ENCODE measurements at regions of chr2 and their contacts with region 1.

Region 1: DNA sequence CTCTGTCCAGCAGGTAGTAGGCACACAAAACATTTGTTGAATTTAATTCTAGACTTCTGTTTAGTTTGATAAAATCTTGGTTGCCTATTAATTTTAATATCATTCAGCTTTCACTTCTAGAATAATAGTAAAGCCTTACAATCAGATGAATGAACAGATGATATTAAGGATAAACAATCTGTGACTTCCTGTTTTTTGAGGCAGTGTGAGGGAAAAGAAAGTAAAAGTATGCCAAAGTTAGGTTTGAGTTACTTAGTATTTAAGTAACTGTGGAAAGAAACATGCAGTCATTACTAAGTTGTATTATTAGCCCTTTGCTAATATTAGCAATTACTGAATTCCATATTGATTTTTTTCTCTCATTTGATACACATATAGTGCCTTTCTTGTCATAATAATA is 31.5 kb downstream of the EPB41L5 start:
- DNase-seq: no peak
- H3K4me3 ChIP-seq: no peak overlapping the region
- CTCF ChIP-seq: no peak

Region 2: GRCh38 chr2:119943058-119943457 is 101.3 kb before region 1 on chr2:
- in situ Hi-C with region 1: loop called (anchors 5 kb)
- DNase-seq: no peak
- H3K4me3 ChIP-seq: no peak overlapping the region
- CTCF ChIP-seq: no peak

Region 3: DNA sequence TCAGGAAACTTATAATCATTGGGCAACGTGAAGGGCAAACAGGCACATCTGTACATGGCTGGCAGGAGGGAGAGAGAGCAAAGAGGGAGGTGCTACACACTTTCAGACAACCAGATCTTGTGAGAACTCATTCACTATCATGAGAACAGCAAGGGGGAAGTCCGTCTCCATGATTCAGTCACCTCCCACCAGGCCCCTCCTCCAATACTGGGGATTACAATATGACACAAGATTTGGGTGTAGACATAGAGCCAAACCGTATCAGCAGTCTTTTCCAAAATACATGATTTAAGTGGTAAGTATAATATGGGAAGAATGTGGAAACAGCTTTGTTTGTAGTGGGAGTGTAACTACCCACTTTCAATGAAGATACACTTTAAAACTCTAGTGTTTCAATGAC is 33.6 kb after region 1 on chr2:
- in situ Hi-C with region 1: no loop called
- DNase-seq: no peak
- H3K4me3 ChIP-seq: no peak overlapping the region
- CTCF ChIP-seq: no peak

Region 4: GRCh38 chr2:120094795-120095194 is 50.5 kb after region 1 on chr2:
- in situ Hi-C with region 1: no loop called
- DNase-seq: no peak
- H3K4me3 ChIP-seq: no peak overlapping the region
- CTCF ChIP-seq: no peak

Region 5: DNA sequence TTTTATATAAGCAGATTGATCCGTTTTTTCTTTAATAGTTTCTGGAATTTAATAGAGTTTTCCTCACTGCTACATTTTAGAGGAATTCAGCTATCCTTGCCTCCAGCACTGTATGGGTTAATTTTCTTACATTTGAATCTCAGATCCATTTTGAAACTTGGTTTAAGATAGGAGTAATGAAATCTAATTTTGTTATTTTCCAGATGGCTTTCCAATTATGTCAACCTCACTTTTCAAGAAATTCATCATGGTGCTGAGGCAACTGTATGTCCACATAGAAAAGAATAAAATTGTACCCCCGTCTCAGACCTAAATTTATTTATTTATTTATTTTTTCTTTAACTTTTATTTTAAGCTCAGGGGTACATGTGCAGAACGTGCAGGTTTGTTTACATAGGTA is 73.7 kb after region 1 on chr2:
- in situ Hi-C with region 1: no loop called
- DNase-seq: no peak
- H3K4me3 ChIP-seq: no peak overlapping the region
- CTCF ChIP-seq: no peak

Measured in astrocyte of the cerebellum (primary cell).